K562 (cell line): ENCODE measurements at regions of chr17 and their contacts with region 1.

Region 1: GRCh38 chr17:28726226-28727130 is at the start of gene TLCD1:
- DNase-seq: peak; percentile 75 to 99 (median 85)
- ATAC-seq: peak; percentile 58
- H3K4me3 ChIP-seq: peak within 1 kb of the TSS; percentile 83
- H3K27ac ChIP-seq: peak within 1 kb of the TSS; percentile 97
- H3K4me1 ChIP-seq: peaks cover 49 to 66% of the 10 kb centered on the region in 2 experiments
- H3K27me3 ChIP-seq: no peaks in the 10 kb centered on the region
- CTCF ChIP-seq: peak; percentile 99 to 100 (median 99)
- EP300 ChIP-seq: peak; percentile 38; the same call in 1 of the 2 replicates
- POLR2A ChIP-seq: no peak
- RAD21 ChIP-seq: peak; percentile 100
- polyA plus RNA-seq, gene TLCD1: 6.8 to 10.2 TPM

Region 2: GRCh38 chr17:28598799-28599310 is 127.6 kb before region 1 on chr17 and contains the start of gene SPAG5:
- CTCF ChIA-PET with region 1: no interaction called
- POLR2A ChIA-PET with region 1: interaction called, 4 read pairs
- in situ Hi-C with region 1: no loop called
- intact Hi-C with region 1: loop called (anchors 5 kb)
- DNase-seq: peak; percentile 98 to 100 (median 100)
- ATAC-seq: peak; percentile 94
- H3K4me3 ChIP-seq: peak within 1 kb of the TSS; percentile 81
- H3K27ac ChIP-seq: peak within 1 kb of the TSS; percentile 88
- H3K4me1 ChIP-seq: peaks cover 8 to 16% of the 10 kb centered on the region in 2 experiments; a peak in 4 of 5 replicates
- H3K27me3 ChIP-seq: no peaks in the 10 kb centered on the region
- CTCF ChIP-seq: no peak
- EP300 ChIP-seq: no peak
- POLR2A ChIP-seq: peak; percentile 98
- RAD21 ChIP-seq: no peak
- polyA plus RNA-seq, gene SPAG5: 94.4 to 286 TPM

Region 3: GRCh38 chr17:28750178-28751047 is 23.9 kb after region 1 on chr17:
- CTCF ChIA-PET with region 1: interaction called, 117 read pairs
- POLR2A ChIA-PET with region 1: interaction called, 367 read pairs
- in situ Hi-C with region 1: no loop called
- intact Hi-C with region 1: loop called (anchors 1 kb)
- DNase-seq: peak; percentile 80 to 98 (median 87)
- ATAC-seq: peak; percentile 87
- H3K4me3 ChIP-seq: no peak overlapping the region
- H3K27ac ChIP-seq: peak overlapping the region; percentile 37; the same call in 2 of the 3 replicates
- H3K4me1 ChIP-seq: peaks cover 20 to 36% of the 10 kb centered on the region in 2 experiments
- H3K27me3 ChIP-seq: no peaks in the 10 kb centered on the region
- CTCF ChIP-seq: peak; percentile 100
- EP300 ChIP-seq: no peak
- POLR2A ChIP-seq: peak; percentile 48; the same call in 1 of the 2 replicates
- RAD21 ChIP-seq: peak; percentile 99

Region 4: GRCh38 chr17:28864991-28865849 is 138.7 kb after region 1 on chr17:
- CTCF ChIA-PET with region 1: no interaction called
- POLR2A ChIA-PET with region 1: interaction called, 5 read pairs
- in situ Hi-C with region 1: no loop called
- intact Hi-C with region 1: loop called (anchors 5 kb)
- DNase-seq: peak; percentile 97 to 99 (median 98)
- ATAC-seq: peak; percentile 80
- H3K4me3 ChIP-seq: no peak overlapping the region; the same call in 1 of the 2 replicates
- H3K27ac ChIP-seq: peak overlapping the region; percentile 94
- H3K4me1 ChIP-seq: peaks cover 68 to 69% of the 10 kb centered on the region in 2 experiments
- H3K27me3 ChIP-seq: no peaks in the 10 kb centered on the region
- CTCF ChIP-seq: no peak
- EP300 ChIP-seq: peak; percentile 100
- POLR2A ChIP-seq: peak; percentile 21; the same call in 1 of the 2 replicates
- RAD21 ChIP-seq: peak in 1 of 2 experiments; percentile 25; a peak in 3 of 4 replicates

Region 5: DNA sequence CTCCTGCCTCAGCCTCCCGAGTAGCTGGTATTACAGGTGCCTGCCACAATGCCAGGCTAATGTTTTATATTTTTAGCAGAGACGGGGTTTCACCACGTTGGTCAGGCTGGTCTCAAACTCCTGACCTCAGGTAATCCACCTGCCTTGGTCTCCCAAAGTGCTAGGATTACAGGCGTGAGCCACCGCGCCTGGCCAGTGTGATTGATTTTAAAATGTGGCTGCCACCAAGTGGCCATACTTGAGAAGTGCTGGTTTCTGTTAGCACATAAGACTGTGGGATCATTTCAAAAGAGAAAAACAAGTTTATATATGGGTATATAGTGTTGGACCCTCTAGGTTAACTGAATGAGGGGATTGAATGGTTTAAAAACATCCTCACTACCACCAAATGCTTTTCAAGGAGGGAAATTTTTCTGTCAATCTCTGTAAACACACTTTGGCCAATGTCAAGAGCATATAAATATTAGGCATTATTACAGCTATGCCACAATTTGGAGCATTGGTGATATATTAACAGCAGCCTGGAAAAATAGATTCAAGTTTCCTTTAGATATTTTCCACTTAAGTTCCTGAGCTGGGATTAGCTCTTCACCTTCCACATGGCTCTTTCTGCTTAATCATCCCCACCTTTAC is 189.9 kb after region 1 on chr17:
- CTCF ChIA-PET with region 1: interaction called, 15 read pairs
- POLR2A ChIA-PET with region 1: interaction called, 7 read pairs
- in situ Hi-C with region 1: no loop called
- intact Hi-C with region 1: loop called (anchors 1 kb)
- DNase-seq: peak in 2 of 4 experiments; percentile 44 to 73
- ATAC-seq: peak; percentile 82
- H3K4me3 ChIP-seq: no peak overlapping the region
- H3K27ac ChIP-seq: no peak overlapping the region; the same call in 2 of the 3 replicates
- H3K4me1 ChIP-seq: peaks cover 17 to 18% of the 10 kb centered on the region in 2 experiments
- H3K27me3 ChIP-seq: no peaks in the 10 kb centered on the region
- CTCF ChIP-seq: peak; percentile 73 to 82 (median 76)
- EP300 ChIP-seq: no peak
- POLR2A ChIP-seq: no peak
- RAD21 ChIP-seq: peak; percentile 76 to 84

Region 6: GRCh38 chr17:29111816-29112499 is 385.5 kb after region 1 on chr17:
- CTCF ChIA-PET with region 1: no interaction called
- POLR2A ChIA-PET with region 1: interaction called, 4 read pairs
- in situ Hi-C with region 1: no loop called
- intact Hi-C with region 1: loop called (anchors 10 kb)
- DNase-seq: peak; percentile 65 to 76 (median 70)
- ATAC-seq: peak; percentile 89
- H3K4me3 ChIP-seq: no peak overlapping the region
- H3K27ac ChIP-seq: no peak overlapping the region
- H3K4me1 ChIP-seq: peaks cover 9 to 26% of the 10 kb centered on the region in 2 experiments; a peak in 4 of 5 replicates
- H3K27me3 ChIP-seq: no peaks in the 10 kb centered on the region
- CTCF ChIP-seq: peak; percentile 88 to 90 (median 89)
- EP300 ChIP-seq: no peak
- POLR2A ChIP-seq: no peak
- RAD21 ChIP-seq: peak; percentile 77 to 84